Posterior cingulate gyrus (tissue), 11 donors: ENCODE measurements at regions of chr1 and their contacts with region 1.

Region 1: GRCh38 chr1:211514030-211514754 is 22.2 kb upstream of the RD3 start:
- DNase-seq: peak; percentile 51 to 96 (median 78)

Region 2: DNA sequence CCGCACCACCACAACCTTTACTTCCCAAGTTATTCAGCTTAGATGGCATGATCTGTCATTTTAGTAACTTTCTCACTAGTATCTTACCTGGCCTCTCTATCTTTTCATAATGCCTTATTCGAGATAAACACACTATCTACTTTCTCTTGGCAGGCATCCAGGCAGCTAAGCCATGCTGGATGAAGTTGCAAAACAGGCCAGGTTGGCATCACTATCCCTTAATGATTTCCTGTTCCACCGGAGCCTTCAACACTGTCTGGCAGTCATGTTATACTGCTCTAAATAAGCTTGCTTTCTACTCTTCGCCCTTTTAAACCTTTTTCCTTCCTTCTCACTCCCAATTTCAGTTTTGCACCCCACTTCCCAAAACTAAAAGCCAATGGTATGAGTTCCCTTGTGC is 368.2 kb before region 1 on chr1:
- intact Hi-C with region 1: no loop called
- DNase-seq: no peak

Region 3: GRCh38 chr1:211323156-211324063 is 190.8 kb before region 1 on chr1:
- intact Hi-C with region 1: loop called (anchors 10 kb)
- DNase-seq: peak in 4 of 10 donors; percentile 25 to 53 (median 43)

Region 4: GRCh38 chr1:211415700-211416099 is 98.5 kb before region 1 on chr1:
- intact Hi-C with region 1: loop called (anchors 10 kb)
- DNase-seq: no peak

Region 5: DNA sequence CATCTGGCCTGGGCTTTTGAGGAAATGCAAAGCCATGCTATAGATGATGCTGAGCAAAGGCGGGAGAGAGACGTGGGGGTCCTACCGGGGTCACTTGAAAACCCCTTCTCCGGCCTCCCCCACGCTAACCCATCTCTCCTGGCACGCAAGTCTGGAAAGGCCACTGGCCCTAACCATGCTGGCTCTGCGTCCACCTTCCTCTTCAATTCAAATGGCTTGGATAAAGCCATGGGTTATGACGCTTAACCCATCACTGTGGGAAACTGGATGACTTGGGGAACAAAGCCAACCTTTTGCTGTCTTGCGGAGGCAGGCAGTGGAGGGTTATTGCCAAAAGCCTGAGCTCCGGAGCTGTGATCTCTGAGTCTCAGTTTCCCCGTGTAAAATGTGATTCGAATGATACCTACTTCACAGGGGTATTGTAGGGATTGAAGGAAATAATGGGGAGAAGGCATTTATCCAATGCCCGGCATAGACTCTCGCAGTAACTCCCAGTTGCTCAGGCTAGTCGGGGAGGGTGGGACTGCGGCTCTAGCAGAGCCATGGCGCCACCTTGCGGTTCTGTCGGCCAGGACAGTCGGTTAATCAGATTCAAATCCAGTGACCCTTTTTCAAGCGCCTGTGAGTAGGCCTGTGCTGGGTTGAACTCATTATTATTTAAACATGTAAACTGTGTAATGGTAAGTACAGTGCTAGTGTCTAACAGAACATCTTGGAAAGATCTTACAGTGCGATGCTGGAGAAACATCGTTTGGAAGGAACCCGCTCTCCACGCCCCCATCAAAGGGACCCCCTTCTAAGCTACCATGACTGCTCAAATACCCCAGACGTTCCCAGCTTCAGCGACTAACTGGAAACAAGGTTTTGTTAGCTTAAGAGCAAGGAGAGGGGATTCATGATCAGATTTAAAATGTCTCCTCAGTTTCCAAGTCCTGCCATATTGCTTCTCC is 140.9 kb after region 1 on chr1:
- intact Hi-C with region 1: loop called (anchors 1 kb)
- DNase-seq: peak; percentile 76 to 98 (median 90)